Activated naive CD4-positive, alpha-beta T cell treated with anti-CD3 and anti-CD28 coated beads for 36 hours (primary cell): ENCODE measurements at regions of chr13 and their contacts with region 1.

Region 1: GRCh38 chr13:45310341-45311125 is 30.4 kb downstream of the TPT1 start:
- DNase-seq: no peak
- H3K4me3 Mint-ChIP-seq: peak overlapping the region; percentile 79
- H3K27ac Mint-ChIP-seq: no peak overlapping the region
- H3K4me1 Mint-ChIP-seq: peaks cover 20% of the 10 kb centered on the region
- H3K27me3 Mint-ChIP-seq: peaks cover 8% of the 10 kb centered on the region

Region 2: DNA sequence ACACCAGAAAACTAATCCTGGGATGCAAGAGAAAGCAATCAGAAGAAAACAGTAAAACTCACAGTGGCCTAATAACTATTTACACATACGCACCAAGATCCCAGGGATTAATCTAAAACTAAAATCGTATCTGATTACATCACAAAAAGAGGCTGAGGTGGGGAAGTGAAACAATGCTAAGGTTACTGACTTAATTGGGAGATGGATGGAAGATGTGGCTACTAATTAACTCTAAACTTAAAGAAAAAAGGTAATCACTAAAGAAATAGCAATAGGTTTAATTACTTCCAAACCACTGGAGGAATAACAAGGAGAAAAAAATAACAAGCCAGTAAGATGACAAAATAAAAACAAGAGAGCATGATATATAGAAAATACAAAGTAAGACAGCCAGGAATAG is 371.7 kb before region 1 on chr13:
- CTCF ChIA-PET with region 1: no interaction called
- intact Hi-C with region 1: no loop called
- DNase-seq: no peak
- H3K4me3 Mint-ChIP-seq: no peak overlapping the region
- H3K27ac Mint-ChIP-seq: no peak overlapping the region
- H3K4me1 Mint-ChIP-seq: peaks cover 4% of the 10 kb centered on the region
- H3K27me3 Mint-ChIP-seq: no peaks in the 10 kb centered on the region

Region 3: DNA sequence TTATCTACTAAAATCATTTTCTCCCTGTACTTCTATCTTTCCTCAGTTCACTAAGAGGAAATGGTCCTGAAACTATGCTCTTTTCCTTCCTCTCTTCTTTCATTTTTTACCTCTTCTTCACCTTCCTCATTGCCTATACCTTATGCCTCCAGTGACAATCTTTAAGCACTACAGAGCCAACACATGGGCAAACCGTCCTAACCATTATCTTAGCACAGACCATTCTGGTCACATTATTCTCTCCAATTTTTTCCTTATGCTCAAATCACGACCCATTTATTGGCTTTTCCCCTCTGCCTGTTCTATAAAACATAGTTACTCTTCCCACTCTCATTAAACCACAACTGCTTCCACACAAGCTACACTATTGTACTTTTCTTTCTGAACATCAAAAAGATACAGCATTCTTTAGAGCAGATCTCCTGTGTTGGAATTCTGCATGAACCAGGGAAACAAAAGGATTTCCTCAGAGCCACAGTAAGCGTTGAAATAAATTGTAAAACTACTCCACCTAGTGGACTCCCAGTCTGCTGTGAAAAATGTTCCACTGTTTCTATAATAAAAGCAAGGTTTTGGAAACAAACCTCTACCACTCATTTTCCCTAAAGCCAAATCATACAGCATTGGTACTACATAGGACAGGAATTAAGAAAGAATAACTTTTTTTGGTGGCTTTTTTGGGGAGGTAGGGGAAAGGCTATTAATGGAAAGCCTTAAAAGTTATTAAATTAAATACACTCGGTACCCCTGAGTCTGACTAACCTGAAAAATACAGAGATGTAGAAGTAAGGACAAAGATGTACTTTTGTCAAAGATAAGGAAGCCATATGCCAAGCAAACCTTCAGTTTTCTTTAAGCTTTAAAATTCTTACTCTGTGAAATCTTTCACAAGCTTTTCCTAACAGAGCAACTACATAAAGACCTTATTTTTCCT is 340.7 kb before region 1 on chr13:
- CTCF ChIA-PET with region 1: interaction called, 3 read pairs
- intact Hi-C with region 1: loop called (anchors 1 kb)
- DNase-seq: no peak
- H3K4me3 Mint-ChIP-seq: no peak overlapping the region
- H3K27ac Mint-ChIP-seq: no peak overlapping the region
- H3K4me1 Mint-ChIP-seq: no peaks in the 10 kb centered on the region
- H3K27me3 Mint-ChIP-seq: no peaks in the 10 kb centered on the region

Region 4: DNA sequence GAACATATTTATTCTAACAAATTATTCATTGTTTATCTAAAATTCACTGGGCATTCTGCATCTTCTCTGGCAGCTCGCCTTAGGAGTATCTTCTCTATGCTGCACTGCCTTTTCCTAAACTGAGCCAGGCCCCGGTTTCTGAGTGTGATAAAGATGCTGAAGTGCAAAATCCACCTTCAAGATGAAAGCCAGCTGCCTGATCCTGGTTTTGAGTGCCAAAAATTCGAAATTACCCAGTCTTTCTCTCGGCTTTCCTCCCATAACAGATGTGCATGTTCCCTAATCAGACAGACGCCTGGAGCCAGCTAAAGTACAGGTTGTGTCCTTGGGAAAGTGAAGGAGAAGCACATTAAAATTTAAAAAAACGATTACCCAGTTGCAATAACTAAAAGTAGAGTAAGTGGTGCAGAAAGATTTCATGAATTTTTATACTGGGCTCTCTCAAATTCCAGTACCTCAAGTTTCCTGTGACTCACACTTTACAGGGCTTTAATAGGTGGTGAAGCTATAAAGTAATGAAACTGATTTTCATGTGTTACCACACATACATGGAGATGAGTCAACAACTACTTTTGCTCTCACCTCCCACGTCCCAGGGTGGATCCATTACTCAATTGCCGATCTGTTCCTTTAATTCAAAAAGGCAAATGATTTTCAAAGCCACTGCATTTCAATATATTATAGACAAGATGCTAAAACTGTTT is 255.2 kb before region 1 on chr13:
- CTCF ChIA-PET with region 1: interaction called, 132 read pairs
- intact Hi-C with region 1: no loop called
- DNase-seq: peak; percentile 86
- H3K4me3 Mint-ChIP-seq: no peak overlapping the region
- H3K27ac Mint-ChIP-seq: no peak overlapping the region
- H3K4me1 Mint-ChIP-seq: peaks cover 30% of the 10 kb centered on the region
- H3K27me3 Mint-ChIP-seq: peaks cover 23% of the 10 kb centered on the region

Region 5: GRCh38 chr13:45178349-45179162 is 132.0 kb before region 1 on chr13:
- CTCF ChIA-PET with region 1: no interaction called
- intact Hi-C with region 1: no loop called
- DNase-seq: no peak
- H3K4me3 Mint-ChIP-seq: no peak overlapping the region
- H3K27ac Mint-ChIP-seq: no peak overlapping the region
- H3K4me1 Mint-ChIP-seq: peaks cover 33% of the 10 kb centered on the region
- H3K27me3 Mint-ChIP-seq: no peaks in the 10 kb centered on the region

Region 6: DNA sequence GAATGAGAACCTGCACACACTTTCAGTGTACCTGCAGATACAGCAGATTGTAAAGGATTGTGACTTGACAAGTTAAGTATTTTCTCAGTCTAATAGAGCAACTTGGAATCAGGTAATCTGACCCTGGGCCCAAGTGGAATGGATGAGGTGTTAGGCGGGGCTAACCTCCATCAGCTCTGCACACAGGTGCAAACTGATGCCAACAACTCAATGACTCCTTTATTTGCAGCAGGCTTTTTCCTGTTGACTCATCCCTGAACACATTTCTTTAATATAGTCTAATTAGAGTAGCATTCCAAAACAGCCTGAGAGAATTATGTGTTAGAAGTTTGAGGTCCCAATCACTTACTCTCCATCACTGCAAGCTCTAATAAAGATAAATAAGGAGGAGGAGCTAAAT is 18.4 kb before region 1 on chr13:
- CTCF ChIA-PET with region 1: interaction called, 26 read pairs
- intact Hi-C with region 1: no loop called
- DNase-seq: no peak
- H3K4me3 Mint-ChIP-seq: no peak overlapping the region
- H3K27ac Mint-ChIP-seq: no peak overlapping the region
- H3K4me1 Mint-ChIP-seq: peaks cover 24% of the 10 kb centered on the region
- H3K27me3 Mint-ChIP-seq: no peaks in the 10 kb centered on the region

Region 7: GRCh38 chr13:45340926-45341750 is 30.6 kb after region 1 on chr13 and contains the start of gene TPT1:
- CTCF ChIA-PET with region 1: interaction called, 4 read pairs
- intact Hi-C with region 1: loop called (anchors 1 kb)
- DNase-seq: peak; percentile 100
- H3K4me3 Mint-ChIP-seq: peak within 1 kb of the TSS; percentile 91
- H3K27ac Mint-ChIP-seq: peak within 1 kb of the TSS; percentile 99
- H3K4me1 Mint-ChIP-seq: peaks cover 43% of the 10 kb centered on the region
- H3K27me3 Mint-ChIP-seq: no peaks in the 10 kb centered on the region
- total RNA-seq, gene TPT1: 3,331 to 3,631 TPM